A549 (cell line): ENCODE measurements at regions of chr1 and their contacts with region 1.

Region 1: DNA sequence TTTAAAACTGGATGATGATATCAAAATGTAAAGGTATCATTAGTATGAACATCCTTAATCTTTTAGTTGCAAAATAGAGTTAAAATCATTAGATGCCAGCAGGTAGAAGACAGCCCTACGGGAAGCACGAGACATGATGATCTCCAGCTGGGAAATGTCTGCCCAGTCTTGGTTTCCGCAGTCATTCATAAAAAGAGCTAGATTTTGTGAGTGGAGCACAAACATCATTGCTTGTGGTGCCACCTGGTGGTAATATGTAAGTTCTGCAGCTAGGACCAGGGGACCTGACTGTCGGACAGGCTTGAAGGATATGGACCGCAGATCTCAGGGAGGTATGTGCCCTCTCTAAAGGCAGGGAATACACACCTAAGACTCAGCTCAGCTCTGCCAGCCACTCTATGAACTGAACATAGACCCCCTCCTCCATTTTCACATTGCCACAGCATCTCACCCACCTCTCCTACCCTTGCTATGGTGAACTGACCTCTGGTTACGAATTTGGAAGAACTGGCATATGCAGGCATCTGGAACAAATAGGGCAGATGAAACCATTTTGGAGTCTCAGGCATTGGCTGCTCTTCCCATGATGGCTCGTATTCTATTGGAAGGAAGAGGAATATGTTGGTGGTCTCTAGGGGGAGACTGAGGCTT is 9.2 kb downstream of the FCMR start:
- DNase-seq: peak; percentile 77 to 87
- ATAC-seq: peak; percentile 58 to 71; a peak in 4 of 6 replicates
- H3K4me3 ChIP-seq: no peak overlapping the region
- H3K27ac ChIP-seq: no peak overlapping the region
- H3K4me1 ChIP-seq: peaks cover 4% of the 10 kb centered on the region; the same call in 1 of the 3 replicates
- CTCF ChIP-seq: peak; percentile 79
- EP300 ChIP-seq: no peak
- POLR2A ChIP-seq: no peak
- RAD21 ChIP-seq: peak; percentile 85 to 89

Region 2: GRCh38 chr1:206612129-206612876 is 300.3 kb before region 1 on chr1 and contains the start of gene EIF2D:
- CTCF ChIA-PET with region 1: interaction called, 13 read pairs
- POLR2A ChIA-PET with region 1: no interaction called
- DNase-seq: peak; percentile 95 to 99
- ATAC-seq: peak; percentile 95 to 98
- H3K4me3 ChIP-seq: peak within 1 kb of the TSS; percentile 62
- H3K27ac ChIP-seq: peak within 1 kb of the TSS; percentile 78 to 88
- H3K4me1 ChIP-seq: peaks cover 6% of the 10 kb centered on the region
- CTCF ChIP-seq: peak; percentile 78
- EP300 ChIP-seq: peak in 1 of 2 experiments; percentile 21; a peak in 1 of 5 replicates
- POLR2A ChIP-seq: peak; percentile 87
- RAD21 ChIP-seq: peak in 1 of 2 experiments; percentile 42; a peak in 3 of 5 replicates
- polyA plus RNA-seq, gene EIF2D: 63.2 and 72.6 TPM in 2 replicates

Region 3: GRCh38 chr1:206706298-206706791 is 206.2 kb before region 1 on chr1:
- CTCF ChIA-PET with region 1: interaction called, 11 read pairs
- POLR2A ChIA-PET with region 1: no interaction called
- DNase-seq: no peak
- ATAC-seq: no peak
- H3K4me3 ChIP-seq: no peak overlapping the region
- H3K27ac ChIP-seq: peak overlapping the region; percentile 30 to 74; a peak in 3 of 6 replicates
- H3K4me1 ChIP-seq: peaks cover 72% of the 10 kb centered on the region
- CTCF ChIP-seq: no peak
- EP300 ChIP-seq: no peak
- POLR2A ChIP-seq: no peak
- RAD21 ChIP-seq: no peak

Region 4: GRCh38 chr1:206734499-206735142 is 177.9 kb before region 1 on chr1:
- CTCF ChIA-PET with region 1: interaction called, 123 read pairs
- POLR2A ChIA-PET with region 1: interaction called, 4 read pairs
- DNase-seq: peak; percentile 43 to 78
- ATAC-seq: peak; percentile 60 to 84; a peak in 4 of 6 replicates
- H3K4me3 ChIP-seq: no peak overlapping the region
- H3K27ac ChIP-seq: no peak overlapping the region
- H3K4me1 ChIP-seq: peaks cover 6% of the 10 kb centered on the region; the same call in 1 of the 3 replicates
- CTCF ChIP-seq: peak; percentile 65
- EP300 ChIP-seq: no peak
- POLR2A ChIP-seq: no peak
- RAD21 ChIP-seq: peak; percentile 73 to 75

Region 5: GRCh38 chr1:206856674-206857464 is 55.7 kb before region 1 on chr1:
- CTCF ChIA-PET with region 1: interaction called, 15 read pairs
- POLR2A ChIA-PET with region 1: no interaction called
- DNase-seq: peak; percentile 27 to 43
- ATAC-seq: peak; percentile 77 to 94
- H3K4me3 ChIP-seq: no peak overlapping the region
- H3K27ac ChIP-seq: no peak overlapping the region
- H3K4me1 ChIP-seq: no peaks in the 10 kb centered on the region
- CTCF ChIP-seq: peak; percentile 51
- EP300 ChIP-seq: no peak
- POLR2A ChIP-seq: no peak
- RAD21 ChIP-seq: peak; percentile 34 to 38; a peak in 2 of 5 replicates

Region 6: GRCh38 chr1:206895830-206896242 is 16.7 kb before region 1 on chr1:
- CTCF ChIA-PET with region 1: interaction called, 67 read pairs
- POLR2A ChIA-PET with region 1: interaction called, 6 read pairs
- DNase-seq: peak; percentile 23 to 88
- ATAC-seq: peak; percentile 82 to 87
- H3K4me3 ChIP-seq: no peak overlapping the region
- H3K27ac ChIP-seq: peak overlapping the region; percentile 67 to 74
- H3K4me1 ChIP-seq: peaks cover 68% of the 10 kb centered on the region
- CTCF ChIP-seq: no peak
- EP300 ChIP-seq: peak; percentile 69 to 70; a peak in 4 of 5 replicates
- POLR2A ChIP-seq: no peak
- RAD21 ChIP-seq: no peak

Region 7: DNA sequence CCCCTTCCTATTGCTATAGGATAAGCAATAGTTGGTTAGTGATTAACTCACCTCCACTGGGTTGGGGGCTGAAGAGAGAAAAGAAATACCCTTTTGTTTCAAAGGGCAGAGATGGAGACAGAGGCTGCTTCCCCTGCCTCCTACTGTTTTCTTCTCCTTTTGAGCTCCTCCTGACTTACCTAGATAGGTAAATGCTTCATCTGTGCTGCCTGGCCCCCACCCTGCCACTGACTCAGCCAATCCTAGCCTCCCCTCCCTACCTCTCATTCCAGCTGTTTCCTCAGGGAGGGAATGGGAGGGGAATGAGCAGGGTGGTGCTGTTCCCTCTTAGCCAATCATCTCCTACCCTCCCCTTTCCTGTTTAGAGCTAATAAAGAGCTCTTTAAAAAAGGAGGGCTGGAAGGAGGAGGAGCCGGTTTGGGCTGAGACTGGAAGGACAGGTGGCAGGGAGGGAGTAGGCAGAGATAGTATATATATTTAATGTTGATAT is 120.0 kb after region 1 on chr1 and contains the start of gene C1orf116:
- CTCF ChIA-PET with region 1: no interaction called
- POLR2A ChIA-PET with region 1: no interaction called
- DNase-seq: peak; percentile 67 to 76
- ATAC-seq: peak; percentile 54 to 70; a peak in 4 of 6 replicates
- H3K4me3 ChIP-seq: peak within 1 kb of the TSS; percentile 33
- H3K27ac ChIP-seq: peak within 1 kb of the TSS; percentile 86 to 89
- H3K4me1 ChIP-seq: peaks cover 76% of the 10 kb centered on the region
- CTCF ChIP-seq: no peak
- EP300 ChIP-seq: no peak
- POLR2A ChIP-seq: no peak
- RAD21 ChIP-seq: no peak; a peak in 1 of 5 replicates
- polyA plus RNA-seq, gene C1orf116: 2.0 and 2.2 TPM in 2 replicates

Region 8: GRCh38 chr1:207077470-207078377 is 165.2 kb after region 1 on chr1:
- CTCF ChIA-PET with region 1: interaction called, 16 read pairs
- POLR2A ChIA-PET with region 1: no interaction called
- DNase-seq: peak; percentile 62 to 78
- ATAC-seq: peak; percentile 67 to 93; a peak in 5 of 6 replicates
- H3K4me3 ChIP-seq: no peak overlapping the region
- H3K27ac ChIP-seq: peak overlapping the region; percentile 12 to 29; a peak in 1 of 6 replicates
- H3K4me1 ChIP-seq: peaks cover 28% of the 10 kb centered on the region
- CTCF ChIP-seq: peak; percentile 96
- EP300 ChIP-seq: no peak
- POLR2A ChIP-seq: no peak
- RAD21 ChIP-seq: peak; percentile 90 to 98

Region 9: DNA sequence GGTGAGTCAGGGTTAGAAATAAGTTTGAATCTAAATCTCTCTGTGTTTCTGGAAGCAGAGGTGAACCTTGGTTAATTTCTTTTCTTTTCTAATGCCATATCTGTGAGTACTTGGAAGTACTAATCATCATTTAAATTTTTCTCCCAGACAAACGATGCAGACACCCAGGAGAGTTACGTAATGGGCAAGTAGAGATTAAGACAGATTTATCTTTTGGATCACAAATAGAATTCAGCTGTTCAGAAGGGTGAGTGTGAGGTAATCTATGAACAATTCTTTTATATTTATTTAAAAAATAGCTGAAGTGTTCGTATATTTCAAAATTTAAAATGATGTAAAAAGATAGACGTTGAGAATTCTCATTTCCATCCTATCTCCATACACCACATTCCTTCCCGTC is 202.7 kb after region 1 on chr1:
- CTCF ChIA-PET with region 1: no interaction called
- POLR2A ChIA-PET with region 1: no interaction called
- DNase-seq: no peak
- ATAC-seq: no peak
- H3K4me3 ChIP-seq: no peak overlapping the region
- H3K27ac ChIP-seq: no peak overlapping the region
- H3K4me1 ChIP-seq: no peaks in the 10 kb centered on the region
- CTCF ChIP-seq: no peak
- EP300 ChIP-seq: no peak
- POLR2A ChIP-seq: no peak
- RAD21 ChIP-seq: no peak